ENCODE measurements at regions of chr6 and their contacts with region 1.

Region 1: DNA sequence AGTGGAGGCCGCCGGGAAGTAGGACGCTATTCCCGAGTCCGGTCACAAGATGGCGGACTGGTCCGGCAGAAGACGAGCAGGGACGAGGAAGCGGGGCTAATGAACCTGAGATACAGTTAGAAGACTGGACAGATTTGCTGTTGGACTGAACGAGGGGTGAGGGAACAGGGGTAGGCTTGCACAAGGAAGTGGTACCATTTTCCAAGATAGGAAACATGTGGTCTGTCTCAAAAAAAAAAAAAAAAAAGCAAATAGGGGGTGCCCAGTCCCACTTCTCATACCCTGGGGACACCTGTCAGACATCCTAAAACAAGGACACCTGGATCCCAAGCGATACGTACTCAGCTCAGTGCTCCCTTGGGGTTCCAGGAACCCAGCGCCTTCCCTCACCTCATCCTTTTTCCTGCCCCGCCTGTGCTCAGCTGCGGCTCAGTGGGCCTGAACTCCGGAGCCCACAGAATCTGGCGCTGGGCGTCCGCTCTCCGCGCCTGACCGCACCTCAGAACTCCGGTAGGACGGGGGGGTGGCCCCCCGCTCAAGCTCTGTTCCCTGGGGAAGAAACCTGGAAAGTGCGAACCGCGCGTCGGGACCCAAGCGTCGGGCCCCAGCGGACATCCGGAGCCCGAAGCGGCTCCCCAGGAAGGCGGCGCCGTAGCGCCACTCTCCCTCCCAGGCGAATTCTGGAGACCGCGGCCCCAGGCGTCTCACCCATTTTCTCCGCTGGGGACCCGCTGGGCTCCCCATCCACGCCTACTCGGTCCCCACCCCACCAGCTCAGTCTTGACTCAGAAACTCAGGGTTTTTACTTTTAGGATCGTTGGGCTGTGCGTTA is at the start of gene LY6G5C:
- DNase-seq: peak; percentile 86
- H3K4me3 ChIP-seq: peak within 1 kb of the TSS; percentile 41
- H3K27ac ChIP-seq: peak within 1 kb of the TSS; percentile 30
- H3K4me1 ChIP-seq: peaks cover 9% of the 10 kb centered on the region
- H3K27me3 ChIP-seq: no peaks in the 10 kb centered on the region
- CTCF ChIP-seq: peak; percentile 66
- total RNA-seq, gene LY6G5C: 1.9 to 2.8 TPM

Region 2: GRCh38 chr6:31888276-31889258 is 207.5 kb after region 1 on chr6:
- intact Hi-C with region 1: loop called (anchors 10 kb)
- DNase-seq: peak; percentile 61
- H3K4me3 ChIP-seq: no peak overlapping the region
- H3K27ac ChIP-seq: no peak overlapping the region
- H3K4me1 ChIP-seq: no peaks in the 10 kb centered on the region
- H3K27me3 ChIP-seq: no peaks in the 10 kb centered on the region
- CTCF ChIP-seq: peak; percentile 65

Region 3: GRCh38 chr6:31958741-31959739 is 278.0 kb after region 1 on chr6 and contains the starts of genes NELFE and SKIC2:
- intact Hi-C with region 1: loop called (anchors 10 kb)
- DNase-seq: peak; percentile 99
- H3K4me3 ChIP-seq: peak within 1 kb of the TSS; percentile 58
- H3K27ac ChIP-seq: peak within 1 kb of the TSS; percentile 32
- H3K4me1 ChIP-seq: peaks cover 6% of the 10 kb centered on the region
- H3K27me3 ChIP-seq: no peaks in the 10 kb centered on the region
- CTCF ChIP-seq: no peak
- total RNA-seq, gene NELFE: 50.3 to 55.6 TPM
- total RNA-seq, gene SKIC2: 52.5 to 81.1 TPM